ENCODE measurements at regions of chr2 and their contacts with region 1.

Region 1: GRCh38 chr2:28392297-28393113 is at the start of gene FOSL2:
- DNase-seq: peak; percentile 88 to 99 (median 92)
- ATAC-seq: peak; percentile 72
- H3K4me3 ChIP-seq: peak within 1 kb of the TSS; percentile 79
- H3K4me3 Mint-ChIP-seq: peak within 1 kb of the TSS; percentile 95
- H3K27ac ChIP-seq: peak within 1 kb of the TSS; percentile 78 to 89
- H3K27ac Mint-ChIP-seq: peak within 1 kb of the TSS; percentile 90
- H3K4me1 ChIP-seq: peaks cover 49% of the 10 kb centered on the region
- H3K4me1 Mint-ChIP-seq: peaks cover 20% of the 10 kb centered on the region
- H3K27me3 ChIP-seq: no peaks in the 10 kb centered on the region
- H3K27me3 Mint-ChIP-seq: peaks cover 5% of the 10 kb centered on the region
- CTCF ChIP-seq: no peak
- total RNA-seq, gene FOSL2: 152 to 155 TPM

Region 2: GRCh38 chr2:27217217-27218121 is 1175.0 kb before region 1 on chr2 and contains the start of gene CAD:
- CTCF ChIA-PET with region 1: no interaction called
- POLR2A ChIA-PET with region 1: no interaction called
- intact Hi-C with region 1: loop called in 1 of 2 experiments (anchors 10 kb)
- DNase-seq: peak; percentile 75 to 94 (median 84)
- ATAC-seq: peak; percentile 74
- H3K4me3 ChIP-seq: peak within 1 kb of the TSS; percentile 87
- H3K4me3 Mint-ChIP-seq: peak within 1 kb of the TSS; percentile 98
- H3K27ac ChIP-seq: peak within 1 kb of the TSS; percentile 67 to 75
- H3K27ac Mint-ChIP-seq: peak within 1 kb of the TSS; percentile 93
- H3K4me1 ChIP-seq: peaks cover 31% of the 10 kb centered on the region
- H3K4me1 Mint-ChIP-seq: peaks cover 45% of the 10 kb centered on the region
- H3K27me3 ChIP-seq: no peaks in the 10 kb centered on the region
- H3K27me3 Mint-ChIP-seq: no peaks in the 10 kb centered on the region
- CTCF ChIP-seq: no peak
- total RNA-seq, gene CAD: 20.0 to 20.3 TPM

Region 3: GRCh38 chr2:27762951-27763906 is 629.3 kb before region 1 on chr2:
- CTCF ChIA-PET with region 1: no interaction called
- POLR2A ChIA-PET with region 1: no interaction called
- intact Hi-C with region 1: loop called in 1 of 2 experiments (anchors 5 kb)
- DNase-seq: no peak
- ATAC-seq: no peak
- H3K4me3 ChIP-seq: no peak overlapping the region
- H3K4me3 Mint-ChIP-seq: no peak overlapping the region
- H3K27ac ChIP-seq: no peak overlapping the region
- H3K27ac Mint-ChIP-seq: no peak overlapping the region
- H3K4me1 ChIP-seq: peaks cover 8% of the 10 kb centered on the region
- H3K4me1 Mint-ChIP-seq: no peaks in the 10 kb centered on the region
- H3K27me3 ChIP-seq: no peaks in the 10 kb centered on the region
- H3K27me3 Mint-ChIP-seq: peaks cover 11% of the 10 kb centered on the region
- CTCF ChIP-seq: no peak

Region 4: DNA sequence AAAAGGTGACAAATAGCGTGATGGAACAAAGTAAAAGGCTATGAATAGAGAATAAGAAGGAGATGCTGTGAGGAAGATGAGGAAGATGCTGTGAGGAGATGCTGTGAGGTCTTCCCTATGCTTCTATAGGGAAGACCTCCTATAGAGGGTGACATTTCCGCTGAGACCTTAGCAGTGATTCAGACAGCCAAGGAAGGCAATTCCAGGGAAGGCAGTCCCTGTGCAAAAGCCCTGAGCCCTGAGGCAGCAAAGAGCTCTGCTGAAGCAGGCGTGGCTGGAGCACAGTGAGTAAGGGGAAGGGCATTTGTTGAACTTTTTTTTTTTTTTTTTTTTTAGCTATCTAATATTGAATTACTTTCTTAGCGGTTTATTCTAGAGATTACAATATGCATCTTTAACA is 142.5 kb before region 1 on chr2:
- CTCF ChIA-PET with region 1: no interaction called
- POLR2A ChIA-PET with region 1: interaction called, 3 read pairs
- intact Hi-C with region 1: loop called in 1 of 2 experiments (anchors 10 kb)
- DNase-seq: no peak
- ATAC-seq: no peak
- H3K4me3 ChIP-seq: no peak overlapping the region
- H3K4me3 Mint-ChIP-seq: no peak overlapping the region
- H3K27ac ChIP-seq: no peak overlapping the region
- H3K27ac Mint-ChIP-seq: peak overlapping the region; percentile 5
- H3K4me1 ChIP-seq: peaks cover 14% of the 10 kb centered on the region
- H3K4me1 Mint-ChIP-seq: peaks cover 27% of the 10 kb centered on the region
- H3K27me3 ChIP-seq: no peaks in the 10 kb centered on the region
- H3K27me3 Mint-ChIP-seq: no peaks in the 10 kb centered on the region
- CTCF ChIP-seq: no peak

Region 5: GRCh38 chr2:28406276-28407096 is 14.0 kb after region 1 on chr2:
- CTCF ChIA-PET with region 1: interaction called, 4 read pairs
- POLR2A ChIA-PET with region 1: interaction called, 46 read pairs
- intact Hi-C with region 1: loop called (anchors 2 kb)
- DNase-seq: peak in 11 of 14 experiments; percentile 27 to 90 (median 62)
- ATAC-seq: peak; percentile 57
- H3K4me3 ChIP-seq: no peak overlapping the region
- H3K4me3 Mint-ChIP-seq: peak overlapping the region; percentile 60
- H3K27ac ChIP-seq: peak overlapping the region in 1 of 2 donors; percentile 75
- H3K27ac Mint-ChIP-seq: peak overlapping the region; percentile 90
- H3K4me1 ChIP-seq: peaks cover 90% of the 10 kb centered on the region
- H3K4me1 Mint-ChIP-seq: peaks cover 78% of the 10 kb centered on the region
- H3K27me3 ChIP-seq: no peaks in the 10 kb centered on the region
- H3K27me3 Mint-ChIP-seq: no peaks in the 10 kb centered on the region
- CTCF ChIP-seq: no peak

Region 6: DNA sequence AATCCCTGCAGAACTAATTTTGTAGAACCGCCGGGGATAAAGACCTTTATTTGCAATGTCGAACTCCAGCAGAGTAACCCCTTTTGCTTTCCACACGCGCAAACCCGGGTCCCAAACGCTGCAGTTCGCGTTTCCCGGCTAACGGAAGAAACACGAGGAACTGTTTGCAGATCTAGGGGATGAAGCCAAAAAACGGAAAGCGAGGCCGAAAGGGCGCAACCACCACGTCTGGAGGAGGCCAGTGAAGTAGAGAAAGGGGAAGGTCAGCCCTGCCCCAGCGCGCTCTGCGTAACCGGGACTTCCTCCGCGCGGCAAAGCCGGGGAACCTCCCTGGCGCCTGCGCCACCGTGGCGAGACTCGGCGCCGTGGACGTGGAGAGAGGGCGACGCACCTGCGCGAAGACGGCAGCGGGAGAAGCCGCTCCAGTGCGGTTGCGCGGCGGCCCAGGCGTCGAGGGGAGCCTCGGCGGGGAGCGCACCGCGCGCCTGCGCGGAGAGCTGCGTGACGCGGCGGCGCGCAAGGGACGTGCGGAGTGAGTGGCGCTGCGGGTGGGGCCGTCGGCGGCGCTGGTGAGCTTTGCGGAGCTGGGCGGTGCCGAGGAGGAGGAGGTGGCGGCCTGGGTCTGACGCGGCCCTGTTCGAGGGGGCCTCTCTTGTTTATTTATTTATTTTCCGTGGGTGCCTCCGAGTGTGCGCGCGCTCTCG is 358.9 kb after region 1 on chr2 and contains the start of gene PPP1CB:
- CTCF ChIA-PET with region 1: no interaction called
- POLR2A ChIA-PET with region 1: no interaction called
- intact Hi-C with region 1: loop called in 1 of 2 experiments (anchors 10 kb)
- DNase-seq: peak; percentile 91 to 100 (median 96)
- ATAC-seq: peak; percentile 84
- H3K4me3 ChIP-seq: peak within 1 kb of the TSS; percentile 92
- H3K4me3 Mint-ChIP-seq: peak within 1 kb of the TSS; percentile 95
- H3K27ac ChIP-seq: peak within 1 kb of the TSS; percentile 98
- H3K27ac Mint-ChIP-seq: peak within 1 kb of the TSS; percentile 95
- H3K4me1 ChIP-seq: peaks cover 56% of the 10 kb centered on the region
- H3K4me1 Mint-ChIP-seq: peaks cover 73% of the 10 kb centered on the region
- H3K27me3 ChIP-seq: no peaks in the 10 kb centered on the region
- H3K27me3 Mint-ChIP-seq: no peaks in the 10 kb centered on the region
- CTCF ChIP-seq: peak; percentile 32
- total RNA-seq, gene PPP1CB: 290 to 304 TPM

Measured in CD4-positive, alpha-beta T cell (primary cell).